T-cell (primary cell): ENCODE measurements at regions of chr12 and their contacts with region 1.

Region 1: GRCh38 chr12:53575502-53576253 is 50.5 kb downstream of the ATF7 start:
- DNase-seq: no peak
- ATAC-seq: no peak
- H3K4me3 ChIP-seq: no peak overlapping the region
- H3K4me3 Mint-ChIP-seq: no peak overlapping the region
- H3K27ac ChIP-seq: no peak overlapping the region
- H3K27ac Mint-ChIP-seq: no peak overlapping the region
- H3K4me1 ChIP-seq: peaks cover 0 to 13% of the 10 kb centered on the region in 2 experiments
- H3K4me1 Mint-ChIP-seq: peaks cover 20 to 37% (median 28%) of the 10 kb centered on the region in 3 donors
- H3K27me3 ChIP-seq: no peaks in the 10 kb centered on the region
- H3K27me3 Mint-ChIP-seq: no peaks in the 10 kb centered on the region

Region 2: GRCh38 chr12:53414756-53415417 is 160.8 kb before region 1 on chr12:
- CTCF ChIA-PET with region 1: no interaction called
- POLR2A ChIA-PET with region 1: no interaction called
- DNase-seq: no peak
- ATAC-seq: no peak
- H3K4me3 ChIP-seq: no peak overlapping the region
- H3K4me3 Mint-ChIP-seq: no peak overlapping the region
- H3K27ac ChIP-seq: no peak overlapping the region
- H3K27ac Mint-ChIP-seq: peak overlapping the region; percentile 52 to 68
- H3K4me1 ChIP-seq: peaks cover 2 to 5% of the 10 kb centered on the region in 2 experiments
- H3K4me1 Mint-ChIP-seq: peaks cover 43 to 58% (median 46%) of the 10 kb centered on the region in 3 donors
- H3K27me3 ChIP-seq: no peaks in the 10 kb centered on the region
- H3K27me3 Mint-ChIP-seq: no peaks in the 10 kb centered on the region

Region 3: GRCh38 chr12:53451661-53452158 is 124.0 kb before region 1 on chr12 and contains the start of gene PCBP2:
- CTCF ChIA-PET with region 1: no interaction called
- POLR2A ChIA-PET with region 1: no interaction called
- DNase-seq: peak; percentile 89 to 99 (median 97)
- ATAC-seq: peak; percentile 94
- H3K4me3 ChIP-seq: peak within 1 kb of the TSS; percentile 76 to 79
- H3K4me3 Mint-ChIP-seq: peak within 1 kb of the TSS; percentile 89 to 99 (median 97)
- H3K27ac ChIP-seq: peak within 1 kb of the TSS; percentile 85
- H3K27ac Mint-ChIP-seq: peak within 1 kb of the TSS; percentile 99
- H3K4me1 ChIP-seq: peaks cover 13 to 17% of the 10 kb centered on the region in 2 experiments
- H3K4me1 Mint-ChIP-seq: peaks cover 34 to 41% (median 38%) of the 10 kb centered on the region in 3 donors
- H3K27me3 ChIP-seq: no peaks in the 10 kb centered on the region
- H3K27me3 Mint-ChIP-seq: no peaks in the 10 kb centered on the region
- total RNA-seq, gene PCBP2: 707 to 1,066 (median 764) TPM

Region 4: DNA sequence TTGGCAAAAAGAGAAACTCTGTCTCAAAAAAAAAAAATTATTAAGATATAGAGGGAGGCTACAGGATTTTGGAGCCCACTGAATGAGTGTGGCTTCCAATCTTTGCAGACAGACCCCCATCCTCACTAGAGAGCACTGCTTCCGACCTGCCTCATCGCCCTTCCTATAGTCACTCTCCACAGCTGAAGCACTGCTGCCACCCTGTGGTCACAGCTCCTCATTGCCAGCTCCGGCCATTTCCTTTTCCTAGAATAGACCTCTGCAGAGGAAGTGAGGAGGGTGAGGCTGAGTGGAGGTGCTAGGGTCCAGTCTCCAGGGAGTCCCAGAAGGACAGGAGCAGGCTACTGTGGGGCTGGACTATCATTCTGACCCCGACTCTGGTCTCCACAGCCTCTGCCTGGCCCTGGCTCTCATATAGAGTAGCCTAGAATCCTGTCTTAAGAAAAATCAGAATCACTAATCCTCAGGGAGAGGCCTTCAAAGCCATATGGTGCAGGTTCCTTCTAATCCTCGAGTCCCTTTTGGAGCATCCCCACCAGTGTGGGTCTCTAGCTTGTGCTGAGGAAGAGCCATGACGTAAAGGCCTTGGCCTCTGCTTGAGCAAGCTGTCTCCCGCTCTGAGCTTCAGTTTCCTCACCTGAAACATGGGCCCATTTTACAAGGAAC is 67.0 kb before region 1 on chr12:
- CTCF ChIA-PET with region 1: no interaction called
- POLR2A ChIA-PET with region 1: interaction called in 1 of 2 experiments, 11 read pairs
- DNase-seq: peak; percentile 40 to 88 (median 73)
- ATAC-seq: peak; percentile 91 to 97 (median 96)
- H3K4me3 ChIP-seq: no peak overlapping the region
- H3K4me3 Mint-ChIP-seq: no peak overlapping the region
- H3K27ac ChIP-seq: peak overlapping the region; percentile 36
- H3K27ac Mint-ChIP-seq: peak overlapping the region; percentile 14 to 45
- H3K4me1 ChIP-seq: peaks cover 0 to 9% of the 10 kb centered on the region in 2 experiments
- H3K4me1 Mint-ChIP-seq: peaks cover 9 to 12% (median 11%) of the 10 kb centered on the region in 3 donors
- H3K27me3 ChIP-seq: no peaks in the 10 kb centered on the region
- H3K27me3 Mint-ChIP-seq: no peaks in the 10 kb centered on the region

Region 5: DNA sequence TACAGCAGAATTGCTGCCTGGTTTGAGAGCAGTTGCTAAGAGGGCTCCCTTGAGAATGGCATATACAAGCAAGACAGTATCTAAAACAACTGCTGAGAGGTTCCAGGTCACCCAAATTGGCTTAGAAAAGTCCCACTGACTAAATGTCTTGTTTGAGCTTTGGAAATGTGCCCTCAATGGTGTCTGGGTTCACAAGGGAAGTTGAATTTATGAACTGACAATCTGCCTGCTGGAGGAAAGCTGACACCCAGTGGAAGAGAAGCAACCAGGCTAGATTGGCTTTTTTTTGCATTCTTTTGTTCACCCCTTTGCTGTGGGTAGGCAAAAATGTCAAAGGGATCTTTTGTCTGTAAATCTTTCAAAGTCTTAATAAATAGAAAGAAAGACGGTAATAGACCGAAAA is 23.8 kb before region 1 on chr12:
- CTCF ChIA-PET with region 1: no interaction called
- POLR2A ChIA-PET with region 1: no interaction called
- DNase-seq: no peak
- ATAC-seq: peak in 1 of 4 experiments; percentile 35
- H3K4me3 ChIP-seq: no peak overlapping the region
- H3K4me3 Mint-ChIP-seq: no peak overlapping the region
- H3K27ac ChIP-seq: no peak overlapping the region
- H3K27ac Mint-ChIP-seq: peak overlapping the region in 1 of 2 donors; percentile 64
- H3K4me1 ChIP-seq: peaks cover 0 to 8% of the 10 kb centered on the region in 2 experiments
- H3K4me1 Mint-ChIP-seq: peaks cover 6 to 19% (median 9%) of the 10 kb centered on the region in 3 donors
- H3K27me3 ChIP-seq: no peaks in the 10 kb centered on the region
- H3K27me3 Mint-ChIP-seq: no peaks in the 10 kb centered on the region